ENCODE measurements at regions of chr3 and their contacts with region 1.

Region 1: GRCh38 chr3:21752749-21753347 is 1.8 kb upstream of the ZNF385D start:
- DNase-seq: no peak

Region 2: DNA sequence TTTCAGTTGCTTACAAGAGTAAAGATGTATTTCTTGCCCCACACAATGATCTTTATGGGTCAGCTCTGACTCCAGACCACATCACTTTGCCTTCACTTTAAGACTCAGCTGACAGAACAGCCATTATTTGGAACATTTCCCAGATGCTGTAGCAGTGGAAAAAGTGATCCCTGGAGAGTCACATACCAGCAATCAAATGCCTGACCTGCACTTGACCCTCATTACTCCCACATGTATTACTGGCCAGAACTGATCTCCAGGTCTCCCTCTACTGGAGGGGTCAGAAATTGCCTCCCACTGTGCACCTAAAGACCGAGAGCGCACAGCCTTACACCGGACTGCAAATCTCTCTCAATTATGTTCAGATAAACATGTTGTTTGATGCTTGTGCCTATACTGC is 86.7 kb after region 1 on chr3:
- intact Hi-C with region 1: loop called (anchors 5 kb)
- DNase-seq: peak; percentile 75

Region 3: DNA sequence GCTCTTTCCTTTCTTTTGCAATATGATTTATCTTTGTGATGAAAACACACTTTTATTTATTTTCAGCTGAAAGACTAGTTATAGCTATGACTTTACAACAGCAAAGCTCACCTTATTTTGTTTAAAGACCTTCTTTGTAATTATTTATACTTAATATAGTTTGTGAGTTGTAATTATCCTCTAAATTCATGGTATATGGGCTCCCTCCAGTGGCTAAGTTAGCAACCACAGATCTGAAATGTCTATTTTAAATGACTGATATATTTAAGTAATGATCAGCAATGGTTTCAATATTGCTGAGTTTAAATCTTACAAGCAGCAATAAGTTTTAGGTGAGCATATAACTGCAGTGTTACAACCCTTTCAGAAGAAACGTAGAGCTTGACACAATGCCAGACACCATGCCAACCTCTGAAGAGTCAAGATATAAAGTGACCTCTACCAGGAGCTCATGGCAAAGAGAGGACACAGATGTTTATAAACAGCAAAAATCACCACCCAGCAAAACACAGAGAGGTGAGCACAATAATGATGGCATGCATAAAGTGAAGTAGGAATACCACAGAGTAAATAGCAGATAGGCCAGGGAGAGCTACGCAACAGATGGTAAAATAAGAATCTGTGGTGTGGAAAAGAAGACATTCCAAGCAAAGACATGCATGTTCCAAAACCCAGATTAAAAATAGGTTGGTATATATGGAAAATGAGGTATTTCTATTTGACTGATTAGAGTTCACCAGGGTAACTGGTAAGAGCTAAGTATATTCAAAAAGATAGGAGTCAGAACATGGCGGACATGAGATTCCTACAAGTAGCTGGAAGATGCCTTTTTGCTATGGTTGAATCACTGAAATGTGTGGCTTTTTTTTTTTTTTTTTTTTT is 141.9 kb after region 1 on chr3:
- intact Hi-C with region 1: loop called (anchors 2 kb)
- DNase-seq: no peak

Region 4: DNA sequence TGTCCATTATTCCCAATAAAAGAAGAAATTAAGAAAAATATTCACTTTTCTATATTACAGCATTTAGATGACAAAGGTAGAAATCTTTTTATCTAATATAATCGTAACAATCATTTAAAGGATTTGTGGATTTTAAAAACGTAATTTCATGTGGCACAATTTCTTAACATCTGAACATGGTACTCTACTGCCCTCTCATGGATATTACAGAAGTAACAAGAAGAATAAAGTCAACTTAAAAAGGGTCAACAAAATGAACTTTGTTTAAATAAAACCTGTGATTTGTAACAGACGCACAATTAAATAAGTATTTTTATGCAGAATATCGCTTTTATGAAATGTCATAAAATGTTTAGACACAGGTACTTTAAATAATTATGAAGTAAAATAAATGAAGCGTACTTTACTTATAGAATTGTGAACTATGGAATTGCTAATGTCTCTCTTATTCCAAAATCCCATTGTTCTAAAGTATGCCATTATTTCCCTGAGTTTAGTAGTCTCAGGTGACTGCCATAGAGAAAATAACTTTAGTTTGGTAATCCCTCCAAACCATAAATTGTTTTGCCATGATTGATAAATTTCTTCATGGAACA is 365.0 kb after region 1 on chr3:
- intact Hi-C with region 1: loop called (anchors 5 kb)
- DNase-seq: no peak

Measured in cardiac septum (tissue), 1 donor.